ENCODE measurements at regions of chr5 and their contacts with region 1.

Region 1: DNA sequence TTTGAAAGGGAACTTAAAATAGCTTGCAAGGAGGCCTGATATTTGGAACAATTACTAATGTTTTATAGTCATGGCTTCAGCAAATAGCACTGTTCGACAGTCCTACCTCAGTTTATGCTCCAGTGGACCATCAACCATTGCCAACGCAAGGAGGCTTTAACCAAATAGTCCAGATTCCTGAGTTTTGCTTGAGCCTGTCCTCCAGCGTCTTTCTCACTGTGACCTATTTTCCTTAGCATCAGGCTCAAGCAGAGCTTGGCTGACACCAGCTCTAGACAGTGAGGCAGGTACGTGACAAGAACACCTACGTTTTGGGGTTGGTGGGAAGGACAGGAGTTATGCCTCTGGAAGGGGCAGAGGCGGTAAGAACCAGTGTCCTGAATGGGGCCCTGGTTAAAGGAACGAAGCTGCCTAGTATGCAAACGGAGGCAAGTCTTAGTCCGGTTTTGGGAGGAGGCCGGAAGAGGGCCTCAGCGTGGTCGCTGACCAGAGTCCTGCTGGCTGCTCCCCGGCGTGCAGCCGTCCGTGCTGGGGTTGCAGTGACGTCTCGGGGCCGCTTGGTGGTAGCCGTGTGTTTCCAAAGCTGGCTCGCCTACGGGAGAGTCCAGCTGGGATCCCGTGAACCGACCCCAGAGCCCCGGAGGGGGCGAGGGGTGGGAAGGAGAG is 998 bp upstream of the FGF18 start:
- DNase-seq: peak; percentile 61
- ATAC-seq: peak; percentile 75
- H3K4me3 ChIP-seq: peak overlapping the region; percentile 41 to 69 (median 51); a peak in 5 of 6 replicates
- H3K27ac ChIP-seq: no peak overlapping the region
- H3K4me1 ChIP-seq: peaks cover 11% of the 10 kb centered on the region
- H3K27me3 ChIP-seq: peaks cover 0 to 23% of the 10 kb centered on the region in 2 experiments; a peak in 4 of 5 replicates
- CTCF ChIP-seq: peak; percentile 95
- EP300 ChIP-seq: no peak
- POLR2A ChIP-seq: no peak
- RAD21 ChIP-seq: peak; percentile 92

Region 2: DNA sequence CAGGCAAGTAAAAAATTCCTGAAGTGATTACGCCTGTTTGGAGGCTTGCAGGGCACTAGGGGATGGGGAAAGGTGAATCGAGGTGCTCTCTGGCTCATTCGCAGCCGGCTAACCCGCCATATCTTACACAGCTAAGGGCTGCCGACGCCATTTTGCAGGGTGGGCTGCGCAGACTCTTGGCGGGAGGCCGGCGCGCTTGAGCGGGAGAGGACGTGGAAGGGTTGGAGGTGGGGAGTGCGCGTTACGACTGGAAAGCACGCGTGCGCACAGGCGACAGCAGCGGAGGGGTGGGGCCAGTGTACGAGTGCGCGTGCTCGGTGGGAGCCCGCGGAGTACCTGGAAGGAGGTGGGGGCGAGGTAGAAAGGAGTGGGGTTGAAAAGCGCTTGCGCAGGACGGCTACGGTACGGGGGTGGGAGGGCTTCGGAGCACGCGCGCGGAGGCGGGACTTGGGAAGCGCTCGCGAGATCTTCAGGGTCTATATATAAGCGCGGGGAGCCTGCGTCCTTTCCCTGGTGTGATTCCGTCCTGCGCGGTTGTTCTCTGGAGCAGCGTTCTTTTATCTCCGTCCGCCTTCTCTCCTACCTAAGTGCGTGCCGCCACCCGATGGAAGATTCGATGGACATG is 31.0 kb before region 1 on chr5 and contains the start of gene NPM1:
- CTCF ChIA-PET with region 1: no interaction called
- POLR2A ChIA-PET with region 1: interaction called, 13 read pairs
- in situ Hi-C with region 1: no loop called
- intact Hi-C with region 1: no loop called
- DNase-seq: peak; percentile 95
- ATAC-seq: peak; percentile 90
- H3K4me3 ChIP-seq: peak within 1 kb of the TSS; percentile 88 to 93 (median 92)
- H3K27ac ChIP-seq: peak within 1 kb of the TSS; percentile 88
- H3K4me1 ChIP-seq: peaks cover 33% of the 10 kb centered on the region
- H3K27me3 ChIP-seq: peaks cover 0 to 4% of the 10 kb centered on the region in 2 experiments; a peak in 1 of 5 replicates
- CTCF ChIP-seq: no peak
- EP300 ChIP-seq: no peak
- POLR2A ChIP-seq: peak; percentile 87 to 99
- RAD21 ChIP-seq: no peak
- total RNA-seq, gene NPM1: 3,353 and 5,553 TPM in 2 replicates

Region 3: GRCh38 chr5:171595801-171596231 is 177.4 kb after region 1 on chr5:
- CTCF ChIA-PET with region 1: no interaction called
- POLR2A ChIA-PET with region 1: no interaction called
- in situ Hi-C with region 1: loop called (anchors 10 kb)
- intact Hi-C with region 1: no loop called
- DNase-seq: peak; percentile 4
- ATAC-seq: no peak; the same call in 2 of the 3 replicates
- H3K4me3 ChIP-seq: no peak overlapping the region
- H3K27ac ChIP-seq: no peak overlapping the region
- H3K4me1 ChIP-seq: no peaks in the 10 kb centered on the region
- H3K27me3 ChIP-seq: peaks cover 0 to 3% of the 10 kb centered on the region in 2 experiments; a peak in 2 of 5 replicates
- CTCF ChIP-seq: no peak
- EP300 ChIP-seq: no peak
- POLR2A ChIP-seq: no peak
- RAD21 ChIP-seq: no peak

Region 4: GRCh38 chr5:171850324-171851285 is 432.2 kb after region 1 on chr5:
- CTCF ChIA-PET with region 1: no interaction called
- POLR2A ChIA-PET with region 1: no interaction called
- in situ Hi-C with region 1: loop called (anchors 5 kb)
- intact Hi-C with region 1: no loop called
- DNase-seq: peak; percentile 13
- ATAC-seq: peak; percentile 45
- H3K4me3 ChIP-seq: no peak overlapping the region
- H3K27ac ChIP-seq: no peak overlapping the region
- H3K4me1 ChIP-seq: no peaks in the 10 kb centered on the region
- H3K27me3 ChIP-seq: no peaks in the 10 kb centered on the region
- CTCF ChIP-seq: peak; percentile 33
- EP300 ChIP-seq: no peak
- POLR2A ChIP-seq: no peak
- RAD21 ChIP-seq: no peak

Region 5: DNA sequence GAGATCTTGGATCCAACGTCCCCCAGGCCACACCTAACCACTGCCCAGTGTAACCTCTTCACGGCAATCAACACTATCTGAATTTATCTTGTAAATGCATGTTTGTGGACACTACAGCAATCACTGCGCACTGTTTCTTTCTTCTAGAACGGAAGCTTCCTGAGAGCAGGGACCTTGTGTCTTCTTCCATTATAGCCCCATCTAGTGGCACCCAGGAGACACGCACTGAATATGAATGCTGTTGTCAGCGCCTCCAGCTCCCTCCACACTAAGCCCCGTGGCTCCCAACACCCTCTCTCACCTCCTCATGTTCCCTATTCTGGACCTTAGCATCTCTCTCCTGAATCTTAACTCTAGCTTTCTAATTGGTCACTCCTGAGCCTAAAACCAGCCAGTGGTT is 439.9 kb after region 1 on chr5:
- CTCF ChIA-PET with region 1: no interaction called
- POLR2A ChIA-PET with region 1: no interaction called
- in situ Hi-C with region 1: loop called (anchors 5 kb)
- intact Hi-C with region 1: loop called (anchors 2 kb)
- DNase-seq: peak; percentile 19
- ATAC-seq: peak; percentile 74
- H3K4me3 ChIP-seq: no peak overlapping the region
- H3K27ac ChIP-seq: no peak overlapping the region
- H3K4me1 ChIP-seq: 0 out of 2 replicates have a peak, but pooled peaks cover 4% of the 10 kb centered on the region
- H3K27me3 ChIP-seq: no peaks in the 10 kb centered on the region
- CTCF ChIP-seq: peak; percentile 63
- EP300 ChIP-seq: no peak
- POLR2A ChIP-seq: no peak
- RAD21 ChIP-seq: no peak

Region 6: GRCh38 chr5:171907725-171908343 is 489.4 kb after region 1 on chr5:
- CTCF ChIA-PET with region 1: interaction called, 12 read pairs
- POLR2A ChIA-PET with region 1: no interaction called
- in situ Hi-C with region 1: loop called (anchors 5 kb)
- intact Hi-C with region 1: loop called (anchors 1 kb)
- DNase-seq: peak; percentile 56
- ATAC-seq: peak; percentile 87
- H3K4me3 ChIP-seq: no peak overlapping the region
- H3K27ac ChIP-seq: no peak overlapping the region
- H3K4me1 ChIP-seq: no peaks in the 10 kb centered on the region
- H3K27me3 ChIP-seq: no peaks in the 10 kb centered on the region
- CTCF ChIP-seq: peak; percentile 70
- EP300 ChIP-seq: no peak
- POLR2A ChIP-seq: no peak
- RAD21 ChIP-seq: no peak

Region 7: DNA sequence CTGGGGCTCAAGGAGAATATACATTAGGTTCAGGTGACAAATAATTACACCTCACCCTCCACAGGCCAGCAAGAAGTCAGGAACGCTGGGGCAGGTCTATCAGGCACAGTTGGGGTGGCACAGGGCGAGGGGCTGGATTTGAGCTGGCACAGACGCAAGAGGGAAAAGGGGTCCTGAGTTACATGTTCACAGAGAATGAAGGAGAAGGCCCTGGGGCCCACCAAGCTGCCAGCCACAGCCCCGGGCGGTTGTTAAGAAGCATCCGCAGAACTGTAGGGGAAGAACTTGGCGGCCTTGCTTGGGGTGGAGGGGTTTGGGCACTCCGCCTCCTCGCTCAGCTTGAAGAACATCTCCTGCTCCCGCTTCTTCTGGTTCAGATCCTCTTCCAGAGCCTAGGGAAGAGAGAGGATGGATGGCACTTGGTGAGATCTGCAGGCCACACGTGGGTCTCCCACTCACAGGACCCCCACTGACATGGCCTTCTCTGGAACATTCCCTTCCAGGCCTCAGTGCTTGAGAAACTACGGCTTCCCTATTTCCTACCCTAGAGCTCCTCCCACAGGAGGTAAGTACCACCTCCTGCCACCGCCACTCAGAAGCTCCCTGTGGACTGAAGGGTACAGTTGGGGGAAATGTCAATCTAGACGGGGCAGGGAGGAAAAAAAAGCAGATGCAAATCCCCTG is 626.3 kb after region 1 on chr5:
- CTCF ChIA-PET with region 1: no interaction called
- POLR2A ChIA-PET with region 1: no interaction called
- in situ Hi-C with region 1: loop called (anchors 5 kb)
- intact Hi-C with region 1: loop called (anchors 5 kb)
- DNase-seq: no peak
- ATAC-seq: no peak
- H3K4me3 ChIP-seq: no peak overlapping the region
- H3K27ac ChIP-seq: no peak overlapping the region
- H3K4me1 ChIP-seq: peaks cover 20% of the 10 kb centered on the region
- H3K27me3 ChIP-seq: no peaks in the 10 kb centered on the region; a peak in 1 of 5 replicates
- CTCF ChIP-seq: peak; percentile 30
- EP300 ChIP-seq: no peak
- POLR2A ChIP-seq: no peak
- RAD21 ChIP-seq: no peak